ENCODE measurements at regions of chr1 and their contacts with region 1.

Region 1: GRCh38 chr1:114282751-114283403 is 129.2 kb upstream of the SYT6 start:
- DNase-seq: peak; percentile 87 to 96 (median 90)
- H3K4me3 ChIP-seq: no peak overlapping the region
- H3K27ac ChIP-seq: no peak overlapping the region
- H3K4me1 ChIP-seq: no peaks in the 10 kb centered on the region
- H3K27me3 ChIP-seq: no peaks in the 10 kb centered on the region
- CTCF ChIP-seq: peak; percentile 87

Region 2: DNA sequence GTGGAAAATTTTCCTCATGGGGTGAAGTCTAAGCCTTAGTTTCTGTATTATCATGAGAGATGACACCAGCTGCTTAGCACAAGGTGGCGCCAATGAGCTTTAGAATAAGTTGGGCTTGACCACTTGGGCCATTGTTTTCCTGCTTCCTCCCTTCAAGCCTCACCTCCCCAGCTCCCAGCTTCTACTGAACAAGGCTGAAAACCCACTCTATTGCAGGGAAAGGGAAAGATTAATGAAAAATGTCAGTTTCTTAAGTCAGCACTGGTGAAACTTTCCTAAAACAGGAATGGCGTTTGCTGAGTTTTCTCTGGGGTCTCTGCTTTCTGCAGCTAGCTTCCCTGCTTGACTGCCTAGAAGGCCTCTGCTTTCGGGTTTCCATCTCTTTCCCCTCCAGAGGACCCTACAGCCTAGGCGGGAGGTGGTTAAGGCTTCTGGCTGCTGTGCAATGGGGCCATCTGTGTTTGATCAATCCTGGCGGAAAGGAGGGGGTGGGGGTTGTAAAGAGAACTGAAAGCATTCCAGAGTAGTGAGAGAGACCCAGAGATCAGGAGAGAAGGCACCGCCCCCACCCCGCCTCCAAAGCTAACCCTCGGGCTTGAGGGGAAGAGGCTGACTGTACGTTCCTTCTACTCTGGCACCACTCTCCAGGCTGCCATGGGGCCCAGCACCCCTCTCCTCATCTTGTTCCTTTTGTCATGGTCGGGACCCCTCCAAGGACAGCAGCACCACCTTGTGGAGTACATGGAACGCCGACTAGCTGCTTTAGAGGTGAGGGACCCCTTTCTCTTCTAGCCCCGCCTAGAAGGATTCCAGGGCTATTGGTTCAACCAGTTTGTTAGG is 303.8 kb before region 1 on chr1 and contains the start of gene OLFML3:
- intact Hi-C with region 1: loop called (anchors 5 kb)
- DNase-seq: peak; percentile 87 to 98 (median 91)
- H3K4me3 ChIP-seq: peak within 1 kb of the TSS; percentile 35 to 74 (median 52)
- H3K27ac ChIP-seq: no peak within 1 kb of the TSS
- H3K4me1 ChIP-seq: peaks cover 4 to 23% (median 7%) of the 10 kb centered on the region in 3 donors
- H3K27me3 ChIP-seq: no peaks in the 10 kb centered on the region
- CTCF ChIP-seq: peak; percentile 83
- total RNA-seq, gene OLFML3: 13.5 TPM

Region 3: DNA sequence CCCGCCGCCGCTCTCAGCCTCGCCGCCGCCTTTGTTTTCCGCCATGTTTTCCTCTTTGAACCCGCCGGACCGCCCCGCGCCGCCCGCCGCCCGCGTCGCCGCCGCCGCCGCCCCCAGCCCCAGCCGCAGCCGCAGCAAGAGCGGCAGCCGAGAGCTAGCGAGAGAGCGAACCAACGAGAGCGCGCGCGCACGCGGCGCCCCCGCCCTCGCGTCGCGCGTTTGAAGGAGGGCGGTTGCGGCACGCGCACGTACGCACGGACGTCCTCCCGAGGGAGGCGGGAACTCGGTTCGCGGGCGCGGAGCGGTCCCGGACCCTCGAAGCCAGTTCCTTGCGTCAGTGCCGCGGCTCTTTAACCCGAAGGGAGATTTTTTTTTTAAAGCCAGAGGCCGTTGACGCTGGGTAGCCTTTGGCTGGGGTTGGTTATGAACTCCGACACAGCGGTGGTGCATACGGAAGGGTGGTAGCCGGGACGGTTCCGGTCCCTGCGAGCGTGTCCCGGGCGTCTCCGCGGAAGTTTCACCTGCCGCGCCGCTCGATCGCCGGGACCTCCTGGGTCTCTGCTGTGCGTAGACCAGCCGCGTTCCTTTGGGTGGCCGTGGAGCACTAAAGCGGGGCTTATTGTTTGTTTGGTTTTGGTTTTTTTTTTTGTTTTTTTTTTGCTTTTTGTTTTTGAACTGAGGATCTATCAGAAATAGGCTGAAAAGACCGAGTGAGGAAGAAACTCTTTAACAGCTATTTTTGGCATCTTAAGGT is 228.3 kb after region 1 on chr1 and contains the start of gene TRIM33:
- intact Hi-C with region 1: no loop called
- DNase-seq: peak; percentile 94 to 98 (median 97)
- H3K4me3 ChIP-seq: peak within 1 kb of the TSS; percentile 78 to 91 (median 88)
- H3K27ac ChIP-seq: peak within 1 kb of the TSS; percentile 93
- H3K4me1 ChIP-seq: peaks cover 0 to 15% (median 9%) of the 10 kb centered on the region in 3 donors
- H3K27me3 ChIP-seq: no peaks in the 10 kb centered on the region
- CTCF ChIP-seq: no peak
- total RNA-seq, gene TRIM33: 36.2 TPM

Measured in kidney (tissue), 22 donors.